PC-9 (cell line): ENCODE measurements at regions of chr17 and their contacts with region 1.

Region 1: GRCh38 chr17:69761751-69762321 is 313.2 kb upstream of the KCNJ16 start:
- DNase-seq: peak; percentile 19 to 98
- H3K4me3 ChIP-seq: peak overlapping the region; percentile 23; the same call in 1 of the 2 replicates
- H3K27ac ChIP-seq: peak overlapping the region; percentile 98
- H3K4me1 ChIP-seq: peaks cover 44% of the 10 kb centered on the region
- H3K27me3 ChIP-seq: no peaks in the 10 kb centered on the region
- CTCF ChIP-seq: no peak

Region 2: GRCh38 chr17:69773081-69773480 is 11.2 kb after region 1 on chr17:
- CTCF ChIA-PET with region 1: no interaction called
- POLR2A ChIA-PET with region 1: no interaction called
- intact Hi-C with region 1: loop called (anchors 1 kb)
- DNase-seq: no peak
- H3K4me3 ChIP-seq: no peak overlapping the region
- H3K27ac ChIP-seq: no peak overlapping the region
- H3K4me1 ChIP-seq: peaks cover 25% of the 10 kb centered on the region
- H3K27me3 ChIP-seq: no peaks in the 10 kb centered on the region
- CTCF ChIP-seq: no peak

Region 3: DNA sequence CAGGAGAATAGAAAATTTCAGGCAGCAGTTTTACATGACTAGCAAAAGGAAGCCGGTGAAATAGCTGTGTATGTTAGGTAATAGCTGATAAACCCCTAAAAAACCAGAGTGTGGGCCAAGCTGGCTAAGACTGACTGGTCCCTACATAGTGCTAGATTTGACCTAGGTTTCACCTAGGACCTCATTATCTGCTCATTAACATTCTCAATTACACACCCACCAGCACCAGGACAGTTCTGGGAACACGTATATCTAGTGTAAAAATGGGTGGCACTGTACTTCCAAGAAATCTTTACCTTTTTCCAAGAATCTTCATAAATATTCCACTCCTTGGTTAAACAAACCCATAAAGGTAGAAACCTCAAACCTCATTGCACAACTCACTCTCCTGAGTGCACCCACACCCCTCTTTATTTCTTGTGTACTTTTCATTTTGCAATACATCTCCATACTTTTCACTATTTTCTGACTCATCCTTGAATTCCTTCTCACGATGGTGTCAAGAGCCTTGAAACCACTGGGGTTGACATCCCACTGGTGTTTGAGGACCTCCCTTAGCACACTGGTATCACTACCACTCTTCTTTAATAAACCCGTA is 50.5 kb after region 1 on chr17:
- CTCF ChIA-PET with region 1: no interaction called
- POLR2A ChIA-PET with region 1: interaction called, 11 read pairs
- intact Hi-C with region 1: no loop called
- DNase-seq: peak in 1 of 2 experiments; percentile 90
- H3K4me3 ChIP-seq: no peak overlapping the region
- H3K27ac ChIP-seq: peak overlapping the region; percentile 46
- H3K4me1 ChIP-seq: peaks cover 20% of the 10 kb centered on the region
- H3K27me3 ChIP-seq: no peaks in the 10 kb centered on the region
- CTCF ChIP-seq: no peak

Region 4: DNA sequence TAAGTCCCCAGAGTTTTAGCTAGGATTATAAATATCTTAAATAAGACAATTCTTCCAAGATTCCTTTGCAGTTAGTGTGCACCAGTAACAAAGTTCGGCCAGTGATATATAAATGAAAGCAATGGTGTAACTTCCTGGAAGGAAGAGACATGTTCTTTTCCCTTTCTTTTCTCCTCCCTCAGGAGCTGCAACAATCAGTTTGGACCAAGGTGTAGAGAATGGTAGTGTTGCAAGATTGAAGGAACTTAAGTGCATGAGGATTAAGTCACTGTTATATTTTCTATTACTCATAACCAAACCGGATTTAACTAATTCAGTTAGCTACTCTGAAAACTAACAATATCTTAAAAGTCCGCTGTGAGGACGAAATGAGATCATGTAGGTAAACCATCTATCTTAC is 244.3 kb after region 1 on chr17:
- CTCF ChIA-PET with region 1: no interaction called
- POLR2A ChIA-PET with region 1: no interaction called
- intact Hi-C with region 1: no loop called
- DNase-seq: no peak
- H3K4me3 ChIP-seq: no peak overlapping the region
- H3K27ac ChIP-seq: no peak overlapping the region
- H3K4me1 ChIP-seq: no peaks in the 10 kb centered on the region
- H3K27me3 ChIP-seq: no peaks in the 10 kb centered on the region
- CTCF ChIP-seq: no peak